PC-3 (cell line): ENCODE measurements at regions of chr3 and their contacts with region 1.

Region 1: GRCh38 chr3:14508961-14509795 is 31.0 kb downstream of the GRIP2 start:
- DNase-seq: peak; percentile 80
- ATAC-seq: peak; percentile 89
- H3K4me3 ChIP-seq: peak overlapping the region; percentile 51; the same call in 1 of the 2 replicates
- H3K27ac ChIP-seq: no peak overlapping the region
- H3K4me1 ChIP-seq: no peaks in the 10 kb centered on the region
- H3K27me3 ChIP-seq: no peaks in the 10 kb centered on the region; the same call in 1 of the 2 replicates
- CTCF ChIP-seq: peak; percentile 80

Region 2: GRCh38 chr3:14345308-14346150 is 163.6 kb before region 1 on chr3:
- CTCF ChIA-PET with region 1: no interaction called
- POLR2A ChIA-PET with region 1: no interaction called
- intact Hi-C with region 1: no loop called
- DNase-seq: peak; percentile 35
- ATAC-seq: peak; percentile 53
- H3K4me3 ChIP-seq: no peak overlapping the region
- H3K27ac ChIP-seq: no peak overlapping the region
- H3K4me1 ChIP-seq: peaks cover 4% of the 10 kb centered on the region; the same call in 1 of the 2 replicates
- H3K27me3 ChIP-seq: no peaks in the 10 kb centered on the region
- CTCF ChIP-seq: no peak

Region 3: DNA sequence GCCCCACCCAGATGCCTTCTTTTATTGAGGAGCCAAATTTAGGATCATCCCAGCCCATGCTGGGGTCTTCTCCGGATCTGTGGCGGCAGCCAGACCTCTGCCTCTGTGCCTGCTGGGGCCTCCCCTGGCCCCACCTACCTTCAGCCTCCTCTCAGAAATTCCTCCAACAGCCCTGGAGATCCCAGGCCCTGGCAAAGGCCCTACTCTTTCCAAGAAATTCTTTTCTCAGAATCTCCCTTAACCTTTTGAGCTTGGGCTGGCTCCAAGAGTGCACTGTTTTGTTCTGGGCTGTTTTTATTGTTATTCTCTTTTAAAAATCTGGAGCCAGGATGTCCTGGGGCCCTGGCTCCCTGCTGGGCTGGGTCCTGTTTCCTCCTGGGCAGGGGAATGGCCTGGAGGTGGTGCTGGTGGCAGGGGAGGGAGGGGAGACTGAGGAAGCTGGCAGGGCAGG is 26.9 kb before region 1 on chr3:
- CTCF ChIA-PET with region 1: no interaction called
- POLR2A ChIA-PET with region 1: no interaction called
- intact Hi-C with region 1: no loop called
- DNase-seq: no peak
- ATAC-seq: no peak
- H3K4me3 ChIP-seq: no peak overlapping the region
- H3K27ac ChIP-seq: no peak overlapping the region
- H3K4me1 ChIP-seq: no peaks in the 10 kb centered on the region
- H3K27me3 ChIP-seq: no peaks in the 10 kb centered on the region
- CTCF ChIP-seq: no peak

Region 4: DNA sequence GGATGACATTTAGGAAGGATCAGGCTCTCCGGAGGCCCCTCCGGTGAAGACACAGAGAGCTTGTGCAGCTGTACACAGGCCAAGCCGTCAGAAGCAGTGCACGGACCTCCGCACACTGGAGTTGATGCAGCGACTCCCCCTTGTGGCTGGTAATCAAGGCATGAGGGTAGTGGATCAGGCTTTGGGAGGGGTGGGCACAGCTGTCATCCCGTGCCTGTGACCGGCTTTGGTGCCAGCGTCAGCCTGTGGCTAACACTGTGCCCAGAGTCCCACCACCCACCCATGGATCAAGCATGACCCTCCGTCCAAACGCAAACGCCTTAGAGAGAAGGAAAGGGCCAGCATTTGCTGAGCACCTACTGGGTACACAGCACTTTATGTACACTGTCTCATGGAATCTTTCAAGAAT is 39.1 kb after region 1 on chr3:
- CTCF ChIA-PET with region 1: interaction called, 4 read pairs
- POLR2A ChIA-PET with region 1: no interaction called
- intact Hi-C with region 1: loop called (anchors 1 kb)
- DNase-seq: peak; percentile 65
- ATAC-seq: peak; percentile 87
- H3K4me3 ChIP-seq: no peak overlapping the region
- H3K27ac ChIP-seq: no peak overlapping the region
- H3K4me1 ChIP-seq: 0 out of 2 replicates have a peak, but pooled peaks cover 4% of the 10 kb centered on the region
- H3K27me3 ChIP-seq: no peaks in the 10 kb centered on the region
- CTCF ChIP-seq: peak; percentile 83

Region 5: DNA sequence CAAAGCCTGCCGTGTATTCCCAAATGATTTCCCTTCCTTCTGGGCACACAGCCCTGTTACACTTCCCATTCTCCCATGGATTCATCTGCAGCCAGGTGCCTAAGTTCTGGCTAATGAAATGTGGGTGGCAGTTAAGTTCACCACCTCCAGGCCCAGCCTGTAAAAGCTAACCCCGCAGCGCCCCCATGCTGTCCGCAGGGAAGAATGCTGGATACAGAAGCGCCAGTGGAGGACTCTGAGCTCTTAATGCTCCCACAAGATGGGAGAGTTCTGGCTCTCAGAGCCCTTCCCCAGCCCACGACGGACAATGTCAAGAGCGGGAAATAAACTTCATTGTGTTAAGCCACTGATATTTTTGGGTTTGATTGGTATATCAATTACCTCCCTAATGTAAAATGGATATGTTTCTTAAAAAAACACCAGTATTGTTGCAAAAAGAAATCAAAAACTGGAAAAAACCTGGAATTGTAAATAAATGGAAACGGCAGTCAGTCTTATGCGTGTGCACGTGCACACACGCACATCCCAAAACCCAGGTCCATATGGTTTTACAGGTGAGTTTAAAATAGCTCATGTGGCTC is 271.8 kb after region 1 on chr3:
- CTCF ChIA-PET with region 1: no interaction called
- POLR2A ChIA-PET with region 1: no interaction called
- intact Hi-C with region 1: loop called (anchors 2 kb)
- DNase-seq: peak; percentile 74
- ATAC-seq: peak; percentile 99
- H3K4me3 ChIP-seq: no peak overlapping the region
- H3K27ac ChIP-seq: no peak overlapping the region
- H3K4me1 ChIP-seq: no peaks in the 10 kb centered on the region
- H3K27me3 ChIP-seq: no peaks in the 10 kb centered on the region
- CTCF ChIP-seq: peak; percentile 95